H1 (cell line): ENCODE measurements at regions of chr3 and their contacts with region 1.

Region 1: DNA sequence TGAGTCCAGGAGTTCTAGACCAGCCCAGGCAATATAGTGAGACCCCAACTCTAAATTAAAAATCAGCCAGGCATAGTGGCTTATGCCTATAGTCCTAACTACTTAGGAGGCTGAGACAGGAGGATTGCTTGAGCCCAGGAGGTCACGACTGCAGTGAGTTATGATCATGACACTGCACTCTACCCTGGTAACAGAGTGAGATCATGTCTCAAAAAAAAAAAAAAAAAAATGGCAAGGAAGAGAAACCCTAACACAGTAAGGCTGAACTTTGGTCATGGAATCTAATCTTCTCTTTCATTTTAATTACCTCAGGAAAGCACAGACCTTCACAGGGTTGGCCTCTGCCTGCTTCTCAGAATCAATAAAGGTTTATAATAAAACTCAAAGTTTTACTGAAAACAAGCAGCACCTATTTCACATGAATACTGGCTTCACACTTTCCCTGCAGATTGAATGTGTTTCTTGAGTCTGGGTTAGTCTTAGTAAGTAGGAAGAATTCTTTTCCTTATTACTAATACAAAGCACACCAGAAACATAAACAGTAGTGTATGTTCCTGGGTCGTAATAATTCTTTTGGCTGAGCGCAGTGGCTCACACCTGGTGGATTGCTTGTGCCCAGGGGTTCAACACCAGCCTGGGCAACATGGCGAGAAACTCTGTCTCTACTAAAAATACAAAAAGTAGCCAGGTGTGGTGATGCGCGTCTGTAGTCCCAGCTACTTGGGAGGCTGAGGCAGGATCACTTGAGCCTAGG is 11.6 kb upstream of the NR2C2 start:
- DNase-seq: no peak
- H3K4me3 ChIP-seq: no peak overlapping the region
- H3K27ac ChIP-seq: no peak overlapping the region
- H3K4me1 ChIP-seq: no peaks in the 10 kb centered on the region
- H3K27me3 ChIP-seq: no peaks in the 10 kb centered on the region
- CTCF ChIP-seq: no peak
- EP300 ChIP-seq: no peak
- POLR2A ChIP-seq: no peak
- RAD21 ChIP-seq: no peak

Region 2: GRCh38 chr3:14947886-14948555 is 12.3 kb after region 1 on chr3:
- CTCF ChIA-PET with region 1: no interaction called
- POLR2A ChIA-PET with region 1: interaction called, 22 read pairs
- DNase-seq: peak; percentile 89 to 96
- H3K4me3 ChIP-seq: peak overlapping the region; percentile 92 to 99 (median 95)
- H3K27ac ChIP-seq: peak overlapping the region; percentile 97
- H3K4me1 ChIP-seq: peaks cover 3 to 10% (median 4%) of the 10 kb centered on the region in 4 experiments; a peak in 4 of 7 replicates
- H3K27me3 ChIP-seq: no peaks in the 10 kb centered on the region
- CTCF ChIP-seq: no peak
- EP300 ChIP-seq: no peak
- POLR2A ChIP-seq: peak in 1 of 2 experiments; percentile 71; a peak in 1 of 3 replicates
- RAD21 ChIP-seq: no peak